ENCODE measurements at regions of chr14 and their contacts with region 1.

Region 1: DNA sequence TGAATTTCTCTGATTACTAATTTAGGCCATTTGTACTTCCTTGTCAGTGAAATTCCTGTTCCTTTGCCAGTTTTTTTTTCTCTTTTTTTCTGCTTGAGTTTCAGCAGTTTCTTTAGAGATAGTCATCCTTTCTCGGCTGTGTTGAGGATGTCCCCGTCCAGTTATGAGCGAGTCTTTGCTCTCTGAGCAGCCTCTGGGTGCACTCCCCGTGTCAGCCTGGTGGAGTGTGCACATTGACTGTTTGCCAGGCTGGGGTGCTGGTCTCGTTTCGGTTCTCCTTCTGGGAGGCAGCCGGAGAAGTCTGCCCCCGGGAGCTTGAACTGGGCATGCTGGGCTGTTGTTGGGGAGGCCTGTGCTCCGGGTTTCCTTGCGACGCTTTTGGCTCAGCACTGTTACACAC is 3.0 kb downstream of the PACS2 start:
- DNase-seq: no peak
- H3K4me3 ChIP-seq: no peak overlapping the region
- H3K27ac ChIP-seq: no peak overlapping the region
- H3K4me1 ChIP-seq: peaks cover 0 to 12% (median 5%) of the 10 kb centered on the region in 4 experiments; a peak in 5 of 7 replicates
- H3K27me3 ChIP-seq: peaks cover 0 to 2% (median 0%) of the 10 kb centered on the region in 4 experiments; a peak in 1 of 7 replicates
- CTCF ChIP-seq: no peak
- EP300 ChIP-seq: no peak
- POLR2A ChIP-seq: no peak
- RAD21 ChIP-seq: no peak

Region 2: GRCh38 chr14:105333613-105334364 is 16.2 kb after region 1 on chr14:
- CTCF ChIA-PET with region 1: interaction called, 10 read pairs
- POLR2A ChIA-PET with region 1: interaction called, 3 read pairs
- DNase-seq: no peak
- H3K4me3 ChIP-seq: no peak overlapping the region
- H3K27ac ChIP-seq: no peak overlapping the region
- H3K4me1 ChIP-seq: peaks cover 2 to 17% (median 8%) of the 10 kb centered on the region in 4 experiments; a peak in 6 of 7 replicates
- H3K27me3 ChIP-seq: no peaks in the 10 kb centered on the region
- CTCF ChIP-seq: no peak
- EP300 ChIP-seq: no peak
- POLR2A ChIP-seq: no peak
- RAD21 ChIP-seq: no peak

Region 3: DNA sequence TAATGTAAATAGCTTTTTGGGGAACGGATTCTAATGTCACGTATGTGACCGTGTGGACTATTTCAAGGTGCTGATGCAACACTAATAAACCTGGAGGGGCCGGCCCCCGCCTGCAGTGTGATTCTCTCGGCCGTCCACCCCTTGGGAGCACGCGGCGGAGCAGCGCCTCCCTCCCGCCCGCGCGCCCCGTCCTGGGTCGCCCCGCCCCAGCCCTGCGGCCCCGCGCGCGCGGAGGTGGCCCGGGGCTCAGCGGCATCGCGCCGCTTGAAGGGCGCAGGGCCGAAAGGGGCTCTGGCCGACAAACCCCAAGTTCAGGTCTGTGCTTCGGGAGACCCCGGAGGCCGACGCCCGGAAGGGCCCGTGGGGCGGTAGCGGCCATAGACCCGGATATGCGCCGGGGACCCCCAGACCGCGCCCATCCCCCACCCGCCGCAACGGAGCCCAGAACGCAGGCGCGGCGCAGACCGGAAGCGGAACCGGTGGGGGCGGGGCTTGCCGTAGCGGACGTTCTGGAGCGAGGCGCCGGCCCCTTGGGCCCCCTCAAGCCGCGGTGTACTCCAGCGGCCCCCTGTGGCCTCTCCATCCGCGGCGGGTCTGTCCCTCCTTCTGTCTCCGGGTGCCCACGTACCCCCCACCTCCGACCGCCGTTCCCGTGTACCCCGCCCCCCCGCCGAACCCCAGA is 80.6 kb after region 1 on chr14 and contains the start of gene TEX22:
- CTCF ChIA-PET with region 1: no interaction called
- POLR2A ChIA-PET with region 1: no interaction called
- DNase-seq: peak; percentile 43 to 95
- H3K4me3 ChIP-seq: peak within 1 kb of the TSS; percentile 33 to 71 (median 40)
- H3K27ac ChIP-seq: peak within 1 kb of the TSS; percentile 72; the same call in 1 of the 2 replicates
- H3K4me1 ChIP-seq: peaks cover 0 to 9% (median 3%) of the 10 kb centered on the region in 4 experiments; a peak in 4 of 7 replicates
- H3K27me3 ChIP-seq: peaks cover 0 to 16% (median 8%) of the 10 kb centered on the region in 4 experiments; a peak in 3 of 7 replicates
- CTCF ChIP-seq: no peak
- EP300 ChIP-seq: no peak
- POLR2A ChIP-seq: peak in 1 of 2 experiments; percentile 82; a peak in 2 of 3 replicates
- RAD21 ChIP-seq: no peak
- total RNA-seq, gene TEX22: 0.39 and 0.82 TPM in 2 replicates